Activated naive CD4-positive, alpha-beta T cell treated with anti-CD3 and anti-CD28 coated beads for 36 hours (primary cell): ENCODE measurements at regions of chr7 and their contacts with region 1.

Region 1: DNA sequence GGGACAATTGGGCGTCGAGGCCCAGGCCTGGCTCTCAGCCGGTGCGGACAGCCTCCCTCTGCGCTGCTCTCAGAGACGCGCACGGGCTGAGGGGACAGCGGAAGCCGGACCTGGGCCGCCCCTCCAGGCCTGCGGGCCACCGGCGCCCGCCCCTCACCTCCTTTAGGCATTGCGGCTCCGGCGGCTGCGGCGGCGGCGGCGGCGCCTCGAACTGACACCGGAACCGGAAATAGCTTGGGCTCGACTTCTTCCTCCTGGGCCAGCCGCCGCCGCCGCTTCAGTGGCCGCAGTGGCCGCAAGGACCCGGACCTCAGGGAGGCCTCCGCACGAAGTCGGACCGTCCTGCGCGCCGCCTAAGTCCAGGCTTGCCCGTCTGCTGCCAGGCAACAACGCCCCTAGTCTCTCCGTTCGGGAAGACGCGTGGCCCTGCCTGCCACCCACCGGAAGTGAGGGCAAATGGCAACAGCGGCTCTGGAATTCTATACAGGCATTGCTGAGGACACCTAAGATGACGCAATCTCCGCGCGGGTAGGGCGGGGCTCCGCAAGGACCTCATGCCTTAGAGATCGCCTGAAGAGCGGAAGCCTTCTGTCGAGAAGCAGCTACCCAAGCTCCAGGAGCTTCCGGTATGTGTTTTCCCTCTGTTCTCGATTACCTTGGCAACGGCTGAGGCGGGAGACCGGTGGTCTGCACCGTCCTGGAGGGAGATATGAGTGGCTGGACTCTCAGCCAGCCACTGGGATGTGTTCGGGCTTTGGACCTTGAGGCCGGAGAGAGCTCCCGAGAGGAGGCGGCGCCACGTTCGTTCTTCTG is at the starts of genes BUD31 and PDAP1:
- DNase-seq: peak; percentile 97
- H3K4me3 Mint-ChIP-seq: peak within 1 kb of the TSS; percentile 89
- H3K27ac Mint-ChIP-seq: peak within 1 kb of the TSS; percentile 92
- H3K4me1 Mint-ChIP-seq: peaks cover 49% of the 10 kb centered on the region
- H3K27me3 Mint-ChIP-seq: no peaks in the 10 kb centered on the region
- total RNA-seq, gene BUD31: 160 to 176 TPM
- total RNA-seq, gene PDAP1: 169 to 194 TPM

Region 2: GRCh38 chr7:99040104-99040958 is 368.3 kb before region 1 on chr7:
- CTCF ChIA-PET with region 1: no interaction called
- intact Hi-C with region 1: no loop called
- DNase-seq: peak; percentile 76
- H3K4me3 Mint-ChIP-seq: no peak overlapping the region
- H3K27ac Mint-ChIP-seq: peak overlapping the region; percentile 80
- H3K4me1 Mint-ChIP-seq: no peaks in the 10 kb centered on the region
- H3K27me3 Mint-ChIP-seq: no peaks in the 10 kb centered on the region

Region 3: DNA sequence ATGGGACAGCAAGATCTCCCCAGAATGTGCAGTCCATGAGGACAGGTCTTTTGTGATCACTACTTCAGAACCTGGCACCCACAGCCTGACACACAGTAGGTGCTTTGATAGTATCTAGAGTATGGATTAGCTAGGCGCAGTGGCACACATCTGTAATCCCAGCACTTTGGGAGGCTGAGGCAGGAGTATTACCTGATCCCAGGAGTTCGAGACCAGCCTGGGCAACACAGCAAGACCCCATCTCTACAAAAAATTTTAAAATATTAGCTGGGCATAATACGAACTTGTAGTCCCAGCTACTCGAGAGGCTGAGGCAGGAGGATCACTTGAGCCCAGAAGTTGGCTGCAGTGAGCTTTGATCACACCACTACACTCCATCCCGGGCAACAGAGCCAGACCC is 56.3 kb before region 1 on chr7:
- CTCF ChIA-PET with region 1: no interaction called
- intact Hi-C with region 1: no loop called
- DNase-seq: no peak
- H3K4me3 Mint-ChIP-seq: no peak overlapping the region
- H3K27ac Mint-ChIP-seq: no peak overlapping the region
- H3K4me1 Mint-ChIP-seq: no peaks in the 10 kb centered on the region
- H3K27me3 Mint-ChIP-seq: no peaks in the 10 kb centered on the region

Region 4: DNA sequence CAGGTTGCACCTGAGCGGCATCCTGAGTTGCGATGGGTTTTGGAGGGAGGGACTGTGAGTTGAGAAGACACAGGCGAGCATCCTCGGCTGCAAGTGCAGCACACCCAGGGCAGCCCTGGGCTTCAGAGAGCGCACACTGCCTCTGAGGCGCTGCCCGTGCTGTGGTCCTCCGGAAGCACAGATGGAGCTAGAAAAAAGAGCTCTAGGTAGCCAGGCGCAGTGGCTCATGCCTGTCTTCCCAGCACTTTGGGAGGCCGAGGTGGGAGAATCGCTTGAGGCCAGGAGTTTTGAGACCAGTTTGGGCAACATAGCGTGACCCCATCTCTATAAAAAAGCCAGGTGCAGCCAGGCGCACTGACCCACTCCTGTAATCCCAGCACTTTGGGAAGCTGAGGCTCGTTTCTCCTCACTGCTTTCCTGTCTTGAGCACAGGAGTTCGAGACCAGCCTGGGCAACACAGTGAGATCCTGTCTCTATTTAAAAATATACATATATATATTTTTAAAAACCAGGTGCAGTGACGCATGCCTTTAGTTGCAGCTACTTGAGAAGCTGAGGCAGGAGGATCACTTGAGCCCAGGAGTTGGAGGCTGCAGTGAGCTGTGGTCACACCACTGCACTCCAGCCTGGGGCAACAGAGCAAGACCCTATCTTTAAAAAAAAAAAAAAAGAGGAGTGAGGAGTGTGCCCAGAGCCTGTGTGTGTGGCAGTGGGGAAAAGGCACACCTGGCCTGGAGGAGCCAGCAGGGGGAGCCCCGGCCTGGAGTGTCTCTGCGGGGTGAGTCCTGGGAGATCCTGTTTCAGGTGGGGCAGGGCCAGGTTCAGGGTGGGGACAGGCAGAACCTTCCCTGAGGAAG is 43.4 kb before region 1 on chr7:
- CTCF ChIA-PET with region 1: interaction called, 4 read pairs
- intact Hi-C with region 1: loop called (anchors 1 kb)
- DNase-seq: peak; percentile 71
- H3K4me3 Mint-ChIP-seq: no peak overlapping the region
- H3K27ac Mint-ChIP-seq: no peak overlapping the region
- H3K4me1 Mint-ChIP-seq: no peaks in the 10 kb centered on the region
- H3K27me3 Mint-ChIP-seq: no peaks in the 10 kb centered on the region

Region 5: DNA sequence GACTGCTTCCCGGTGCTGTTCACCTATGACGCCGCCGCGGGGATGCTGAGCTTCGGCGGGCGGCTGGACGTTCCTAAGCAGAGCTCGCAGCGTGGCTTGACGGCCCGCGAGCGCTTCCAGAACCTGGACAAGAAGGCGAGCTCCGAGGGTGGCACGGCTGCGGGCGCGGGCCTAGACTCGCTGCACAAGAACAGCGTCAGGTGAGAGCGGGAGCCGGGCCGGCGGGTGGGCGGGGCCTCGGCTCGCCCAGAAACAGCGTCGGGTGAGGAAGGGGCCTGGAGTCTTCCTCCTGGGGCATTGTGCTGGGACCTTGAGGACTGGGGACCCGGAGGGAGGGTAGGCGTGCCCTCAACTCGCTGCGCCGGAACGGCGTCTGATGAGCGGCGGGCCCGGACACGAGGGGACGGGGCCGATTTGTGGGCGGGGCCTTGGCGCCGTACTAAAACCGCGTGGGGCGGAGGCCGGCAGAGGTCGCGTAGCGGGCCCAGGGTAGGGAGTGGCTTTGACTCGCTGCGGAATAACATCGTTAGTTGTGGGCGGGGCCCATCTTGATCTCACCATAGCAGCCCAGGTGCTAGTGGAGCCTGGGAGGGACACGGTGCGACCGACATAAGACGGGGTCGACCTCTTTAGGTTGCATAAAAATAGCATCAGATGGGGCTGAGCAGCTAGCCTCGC is 15.8 kb before region 1 on chr7:
- CTCF ChIA-PET with region 1: interaction called, 3 read pairs
- intact Hi-C with region 1: loop called (anchors 1 kb)
- DNase-seq: peak; percentile 79
- H3K4me3 Mint-ChIP-seq: peak overlapping the region; percentile 63
- H3K27ac Mint-ChIP-seq: peak overlapping the region; percentile 85
- H3K4me1 Mint-ChIP-seq: peaks cover 20% of the 10 kb centered on the region
- H3K27me3 Mint-ChIP-seq: no peaks in the 10 kb centered on the region

Region 6: GRCh38 chr7:99504603-99505323 is 96.2 kb after region 1 on chr7 and contains the start of gene ZKSCAN5:
- CTCF ChIA-PET with region 1: no interaction called
- intact Hi-C with region 1: loop called (anchors 2 kb)
- DNase-seq: peak; percentile 98
- H3K4me3 Mint-ChIP-seq: peak within 1 kb of the TSS; percentile 87
- H3K27ac Mint-ChIP-seq: peak within 1 kb of the TSS; percentile 98
- H3K4me1 Mint-ChIP-seq: peaks cover 25% of the 10 kb centered on the region
- H3K27me3 Mint-ChIP-seq: no peaks in the 10 kb centered on the region
- total RNA-seq, gene ZKSCAN5: 7.2 to 8.0 TPM

Region 7: GRCh38 chr7:99918959-99919813 is 510.6 kb after region 1 on chr7 and contains the start of gene TRIM4:
- CTCF ChIA-PET with region 1: no interaction called
- intact Hi-C with region 1: loop called (anchors 1 kb)
- DNase-seq: peak; percentile 96
- H3K4me3 Mint-ChIP-seq: peak within 1 kb of the TSS; percentile 90
- H3K27ac Mint-ChIP-seq: peak within 1 kb of the TSS; percentile 93
- H3K4me1 Mint-ChIP-seq: peaks cover 38% of the 10 kb centered on the region
- H3K27me3 Mint-ChIP-seq: no peaks in the 10 kb centered on the region
- total RNA-seq, gene TRIM4: 25.7 to 25.8 TPM